Breast epithelium (tissue), 4 donors: ENCODE measurements at regions of chr9 and their contacts with region 1.

Region 1: DNA sequence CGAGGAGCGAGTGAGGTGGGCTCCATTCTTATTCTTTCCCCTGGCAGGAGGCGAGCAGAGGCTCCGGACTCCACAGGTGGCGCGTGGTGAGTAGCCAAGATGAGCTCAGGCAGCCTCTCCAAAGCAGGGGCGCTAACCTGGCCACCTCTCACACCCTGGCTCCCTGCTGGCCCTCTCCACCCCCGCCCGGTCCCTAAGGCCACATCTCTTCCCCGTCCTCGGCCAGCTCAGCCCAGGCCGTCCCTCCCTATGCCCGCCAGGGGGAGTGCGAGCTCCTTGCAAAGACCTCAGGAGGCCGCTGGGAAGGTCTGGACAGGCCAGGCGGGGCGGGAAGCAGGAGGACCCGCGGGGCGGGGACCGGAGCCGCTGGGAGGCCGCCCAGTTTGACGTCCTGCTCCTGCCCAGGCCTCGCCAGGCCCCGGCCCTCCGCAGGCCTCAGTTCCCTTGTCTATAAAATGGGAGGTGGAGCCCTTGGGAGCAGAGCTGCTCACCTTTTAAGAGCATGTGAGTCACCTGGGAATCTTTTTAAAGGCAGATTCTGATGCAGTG is 46.3 kb upstream of the GGTA1 start:
- DNase-seq: peak; percentile 92 to 95
- H3K4me3 ChIP-seq: peak overlapping the region in 2 of 3 donors; percentile 38 to 56
- H3K27ac ChIP-seq: peak overlapping the region in 1 of 2 donors; percentile 9
- H3K4me1 ChIP-seq: peaks cover 0 to 15% of the 10 kb centered on the region in 2 donors
- H3K27me3 ChIP-seq: no peaks in the 10 kb centered on the region
- CTCF ChIP-seq: peak; percentile 86 to 96 (median 95)
- POLR2A ChIP-seq: no peak

Region 2: GRCh38 chr9:121692606-121693387 is 146.8 kb after region 1 on chr9:
- intact Hi-C with region 1: loop called (anchors 5 kb)
- DNase-seq: no peak
- H3K4me3 ChIP-seq: no peak overlapping the region
- H3K27ac ChIP-seq: peak overlapping the region; percentile 1 to 45
- H3K4me1 ChIP-seq: no peaks in the 10 kb centered on the region
- H3K27me3 ChIP-seq: no peaks in the 10 kb centered on the region
- CTCF ChIP-seq: no peak
- POLR2A ChIP-seq: no peak

Region 3: DNA sequence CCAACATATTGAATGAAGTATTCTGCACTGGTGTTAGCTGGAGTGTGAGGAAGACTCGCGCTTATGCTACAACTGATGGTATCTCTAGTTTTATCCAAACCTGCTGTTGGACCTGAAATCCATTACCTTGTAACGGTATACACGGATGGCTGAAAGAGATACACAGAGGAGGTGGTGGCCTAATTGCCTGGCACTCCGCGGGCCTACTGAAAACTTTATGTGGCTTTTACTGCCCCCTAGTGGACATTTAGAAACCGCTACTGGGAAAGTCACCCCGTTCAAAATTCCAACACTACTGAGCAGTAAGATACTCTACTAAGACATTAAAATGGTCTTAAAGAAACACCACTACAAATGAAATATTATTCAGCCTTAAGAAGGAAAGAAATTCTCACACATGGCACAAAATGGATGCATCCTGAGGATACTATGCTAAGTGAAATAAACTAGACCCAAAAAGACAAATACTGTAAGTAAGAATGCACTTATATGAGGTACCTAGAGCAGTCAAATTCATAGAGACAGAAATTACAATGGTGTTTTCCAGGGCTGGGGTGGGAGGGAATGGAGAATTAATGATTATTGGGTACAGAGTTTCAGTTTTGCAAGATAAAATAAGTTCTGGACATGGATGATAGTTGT is 446.7 kb after region 1 on chr9:
- intact Hi-C with region 1: loop called (anchors 10 kb)
- DNase-seq: peak in 1 of 2 donors; percentile 69
- H3K4me3 ChIP-seq: no peak overlapping the region
- H3K27ac ChIP-seq: no peak overlapping the region
- H3K4me1 ChIP-seq: no peaks in the 10 kb centered on the region
- H3K27me3 ChIP-seq: no peaks in the 10 kb centered on the region
- CTCF ChIP-seq: peak; percentile 83 to 90 (median 87)
- POLR2A ChIP-seq: no peak